ENCODE measurements at regions of chr1 and their contacts with region 1.

Region 1: DNA sequence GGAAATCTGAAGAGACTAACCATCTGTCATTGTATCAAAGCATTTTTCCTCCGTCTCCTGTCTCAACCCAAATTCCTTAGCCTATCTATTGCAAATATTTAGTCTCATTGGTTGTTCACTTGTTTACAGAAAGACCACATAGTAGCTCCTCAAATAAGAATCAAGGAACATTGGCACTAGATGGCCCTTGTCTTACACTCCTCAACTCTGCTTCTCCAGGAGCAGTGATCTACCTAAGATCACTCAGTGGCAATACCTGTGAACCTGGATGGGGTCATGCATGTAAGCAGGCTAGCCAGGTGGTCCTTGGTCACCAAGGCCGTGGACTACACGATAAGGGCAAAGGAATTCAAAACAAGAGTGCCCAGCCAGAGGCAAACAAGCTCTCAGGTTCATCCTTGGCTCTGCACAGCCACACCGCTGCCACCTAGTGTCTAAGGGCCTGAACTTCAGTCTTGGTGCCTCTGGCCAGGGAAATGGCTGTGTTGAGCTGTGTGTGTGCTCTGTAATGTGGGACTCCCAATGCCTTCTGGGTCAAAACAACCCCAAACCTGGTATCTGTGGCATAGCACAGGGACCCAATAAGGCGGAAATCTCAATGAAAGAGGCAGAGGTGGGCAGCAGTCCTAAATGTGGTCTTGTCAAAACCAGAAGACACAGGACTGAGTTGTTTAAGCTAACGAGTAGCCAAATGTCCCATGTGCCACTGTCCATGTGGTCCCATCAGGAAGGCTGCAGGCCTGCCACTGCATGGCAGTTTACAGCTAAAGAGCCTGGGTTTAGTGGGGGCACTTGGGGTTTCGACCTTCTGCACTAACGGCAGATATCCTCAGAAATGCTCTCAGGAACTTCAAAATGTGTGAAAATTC is 54.5 kb downstream of the GPR161 start:
- DNase-seq: peak; percentile 87
- H3K4me3 Mint-ChIP-seq: no peak overlapping the region
- H3K27ac Mint-ChIP-seq: no peak overlapping the region
- H3K4me1 Mint-ChIP-seq: no peaks in the 10 kb centered on the region
- H3K27me3 Mint-ChIP-seq: no peaks in the 10 kb centered on the region

Region 2: GRCh38 chr1:167715157-167715999 is 366.9 kb before region 1 on chr1:
- CTCF ChIA-PET with region 1: interaction called, 14 read pairs
- intact Hi-C with region 1: loop called (anchors 2 kb)
- DNase-seq: peak; percentile 95
- H3K4me3 Mint-ChIP-seq: peak overlapping the region; percentile 79
- H3K27ac Mint-ChIP-seq: peak overlapping the region; percentile 92
- H3K4me1 Mint-ChIP-seq: peaks cover 28% of the 10 kb centered on the region
- H3K27me3 Mint-ChIP-seq: peaks cover 5% of the 10 kb centered on the region

Region 3: GRCh38 chr1:167826127-167826526 is 256.1 kb before region 1 on chr1:
- CTCF ChIA-PET with region 1: interaction called, 10 read pairs
- intact Hi-C with region 1: no loop called
- DNase-seq: no peak
- H3K4me3 Mint-ChIP-seq: no peak overlapping the region
- H3K27ac Mint-ChIP-seq: no peak overlapping the region
- H3K4me1 Mint-ChIP-seq: no peaks in the 10 kb centered on the region
- H3K27me3 Mint-ChIP-seq: no peaks in the 10 kb centered on the region

Region 4: DNA sequence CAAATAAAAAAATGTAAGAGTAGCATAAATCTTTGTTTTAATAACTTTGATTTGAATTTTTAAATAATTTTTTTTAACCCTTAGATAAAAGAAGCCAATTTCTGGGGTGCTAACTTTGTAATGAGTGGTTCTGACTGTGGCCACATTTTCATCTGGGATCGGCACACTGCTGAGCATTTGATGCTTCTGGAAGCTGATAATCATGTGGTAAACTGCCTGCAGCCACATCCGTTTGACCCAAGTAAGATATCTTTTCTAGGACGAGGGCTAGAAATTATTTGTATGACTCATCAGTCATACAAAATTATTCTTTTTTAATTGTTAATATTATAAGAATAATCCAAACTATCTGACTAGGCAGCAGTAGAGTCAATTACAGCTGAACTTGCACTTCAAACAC is 16.7 kb before region 1 on chr1:
- CTCF ChIA-PET with region 1: interaction called, 54 read pairs
- intact Hi-C with region 1: no loop called
- DNase-seq: no peak
- H3K4me3 Mint-ChIP-seq: no peak overlapping the region
- H3K27ac Mint-ChIP-seq: no peak overlapping the region
- H3K4me1 Mint-ChIP-seq: no peaks in the 10 kb centered on the region
- H3K27me3 Mint-ChIP-seq: no peaks in the 10 kb centered on the region

Region 5: DNA sequence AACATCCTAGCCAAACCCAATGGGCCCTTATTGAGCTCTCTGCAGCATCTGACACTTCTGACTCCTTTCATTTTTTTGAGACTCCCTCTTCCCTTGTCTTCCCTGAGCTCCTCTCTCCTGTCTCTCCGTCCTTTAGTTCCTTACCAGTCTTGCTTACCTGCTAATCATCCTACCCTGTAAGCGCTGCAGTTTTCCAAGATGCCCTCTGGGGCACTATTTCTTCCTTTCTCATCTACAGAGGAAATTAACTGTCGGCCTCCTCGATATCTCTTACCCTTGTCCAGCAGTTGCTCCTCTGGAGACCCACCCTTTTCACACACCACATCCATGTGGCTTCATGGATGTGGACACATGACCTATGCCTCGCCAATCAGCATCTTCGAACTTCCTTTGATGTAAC is 47.7 kb after region 1 on chr1:
- CTCF ChIA-PET with region 1: interaction called, 11 read pairs
- intact Hi-C with region 1: no loop called
- DNase-seq: no peak
- H3K4me3 Mint-ChIP-seq: no peak overlapping the region
- H3K27ac Mint-ChIP-seq: no peak overlapping the region
- H3K4me1 Mint-ChIP-seq: no peaks in the 10 kb centered on the region
- H3K27me3 Mint-ChIP-seq: peaks cover 28% of the 10 kb centered on the region

Region 6: DNA sequence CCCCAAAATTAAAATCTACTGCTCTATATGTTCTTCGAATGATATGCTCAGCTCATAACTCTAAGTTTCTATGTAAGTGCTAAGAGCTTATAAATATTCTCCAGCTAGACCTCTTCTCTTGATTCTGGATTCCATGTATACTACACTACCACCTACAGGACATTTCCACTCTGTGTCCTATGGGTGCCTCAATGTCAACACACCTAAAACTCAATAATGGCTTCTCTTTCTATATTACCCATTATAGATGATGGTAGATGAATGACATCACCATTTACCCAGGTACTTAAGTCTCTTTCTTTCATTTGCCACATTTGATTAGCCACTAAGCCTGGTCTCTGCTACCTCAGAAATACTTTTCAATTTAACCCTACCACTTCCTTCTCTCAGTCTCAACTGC is 239.7 kb after region 1 on chr1:
- CTCF ChIA-PET with region 1: interaction called, 9 read pairs
- intact Hi-C with region 1: loop called (anchors 1 kb)
- DNase-seq: no peak
- H3K4me3 Mint-ChIP-seq: no peak overlapping the region
- H3K27ac Mint-ChIP-seq: no peak overlapping the region
- H3K4me1 Mint-ChIP-seq: peaks cover 4% of the 10 kb centered on the region
- H3K27me3 Mint-ChIP-seq: no peaks in the 10 kb centered on the region

Measured in activated naive CD4-positive, alpha-beta T cell treated with anti-CD3 and anti-CD28 coated beads for 36 hours (primary cell).